ENCODE measurements at regions of chr19 and their contacts with region 1.

Region 1: DNA sequence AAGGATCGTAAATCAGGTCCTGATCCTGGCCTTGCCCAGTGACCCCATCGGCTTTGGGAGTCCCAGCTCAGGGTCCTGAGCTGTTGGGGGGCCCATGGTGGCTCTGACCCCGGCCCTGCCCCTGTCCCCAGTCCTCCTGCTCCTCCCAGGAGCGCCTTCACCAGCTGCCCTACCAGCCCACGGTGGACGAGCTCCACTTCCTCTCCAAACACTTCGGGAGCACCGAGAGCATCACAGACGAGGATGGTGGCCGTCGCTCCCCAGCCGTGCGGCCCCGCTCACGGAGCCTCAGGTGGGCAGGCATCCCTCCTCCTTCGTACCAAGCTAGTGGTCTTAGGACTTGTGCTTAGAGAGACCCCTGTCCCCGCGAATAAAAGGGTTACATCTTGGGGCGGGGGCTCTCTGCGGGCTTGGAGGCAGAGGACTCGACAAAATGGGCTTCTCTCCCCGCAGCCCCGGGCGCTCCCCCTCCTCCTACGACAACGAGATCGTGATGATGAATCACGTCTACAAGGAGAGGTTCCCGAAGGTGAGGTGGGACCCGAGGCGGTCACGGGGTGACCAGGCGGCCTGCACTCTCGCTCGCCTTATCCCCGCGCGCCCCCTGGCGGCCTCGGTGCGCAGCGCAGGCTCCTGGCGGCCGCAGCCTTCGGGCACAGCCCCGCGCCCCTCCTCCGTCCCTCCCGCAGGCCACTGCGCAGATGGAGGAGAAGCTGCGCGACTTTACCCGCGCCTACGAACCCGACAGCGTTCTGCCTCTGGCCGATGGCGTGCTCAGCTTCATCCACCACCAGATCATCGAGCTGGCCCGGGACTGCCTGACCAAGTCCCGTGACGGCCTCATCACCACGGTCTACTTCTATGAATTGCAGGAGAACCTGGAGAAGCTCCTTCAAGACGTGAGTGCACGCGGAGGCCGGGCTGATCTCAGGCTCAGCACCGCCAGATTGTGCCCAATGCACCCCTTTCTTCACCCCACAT is 9.1 kb downstream of the MAST1 start:
- DNase-seq: peak; percentile 76
- ATAC-seq: peak; percentile 97 to 99
- H3K4me3 ChIP-seq: no peak overlapping the region
- H3K27ac ChIP-seq: peak overlapping the region; percentile 20 to 70; a peak in 2 of 6 replicates
- H3K4me1 ChIP-seq: 0 out of 3 replicates have a peak, but pooled peaks cover 3% of the 10 kb centered on the region
- CTCF ChIP-seq: peak; percentile 80
- EP300 ChIP-seq: no peak
- POLR2A ChIP-seq: no peak
- RAD21 ChIP-seq: peak; percentile 75 to 85

Region 2: DNA sequence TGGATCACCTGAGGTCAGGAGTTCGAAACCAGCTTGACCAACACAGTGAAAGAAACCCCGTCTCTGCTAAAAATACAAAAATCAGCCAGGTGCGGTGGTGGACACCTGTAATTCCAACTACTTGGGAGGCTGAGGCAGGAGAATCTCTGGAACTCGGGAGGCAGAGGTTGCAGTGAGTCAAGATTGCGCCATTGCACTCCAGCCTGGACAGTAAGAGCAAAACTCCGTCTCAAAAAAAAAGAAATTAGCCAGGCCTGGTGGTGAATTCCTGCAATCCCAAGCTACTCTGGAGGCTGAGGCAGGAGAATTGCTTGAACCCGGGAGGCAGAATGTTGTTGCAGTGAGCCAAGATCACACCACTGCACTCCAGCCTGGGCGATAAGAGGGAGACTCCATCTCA is 138.8 kb before region 1 on chr19:
- CTCF ChIA-PET with region 1: interaction called, 11 read pairs
- POLR2A ChIA-PET with region 1: no interaction called
- DNase-seq: no peak
- ATAC-seq: no peak
- H3K4me3 ChIP-seq: no peak overlapping the region
- H3K27ac ChIP-seq: no peak overlapping the region
- H3K4me1 ChIP-seq: no peaks in the 10 kb centered on the region
- CTCF ChIP-seq: no peak
- EP300 ChIP-seq: no peak
- POLR2A ChIP-seq: no peak
- RAD21 ChIP-seq: no peak

Region 3: GRCh38 chr19:12766051-12766521 is 81.4 kb before region 1 on chr19:
- CTCF ChIA-PET with region 1: interaction called, 79 read pairs
- POLR2A ChIA-PET with region 1: no interaction called
- DNase-seq: peak; percentile 82 to 84
- ATAC-seq: peak; percentile 97
- H3K4me3 ChIP-seq: peak overlapping the region; percentile 40
- H3K27ac ChIP-seq: peak overlapping the region; percentile 48 to 87; a peak in 5 of 6 replicates
- H3K4me1 ChIP-seq: no peaks in the 10 kb centered on the region
- CTCF ChIP-seq: peak; percentile 78
- EP300 ChIP-seq: no peak
- POLR2A ChIP-seq: peak; percentile 23; the same call in 1 of the 2 replicates
- RAD21 ChIP-seq: peak; percentile 69 to 80

Region 4: GRCh38 chr19:12789904-12790619 is 57.4 kb before region 1 on chr19:
- CTCF ChIA-PET with region 1: interaction called, 16 read pairs
- POLR2A ChIA-PET with region 1: no interaction called
- DNase-seq: peak; percentile 71 to 94
- ATAC-seq: peak; percentile 51 to 53
- H3K4me3 ChIP-seq: peak overlapping the region; percentile 92
- H3K27ac ChIP-seq: peak overlapping the region; percentile 96 to 99
- H3K4me1 ChIP-seq: peaks cover 59% of the 10 kb centered on the region
- CTCF ChIP-seq: no peak
- EP300 ChIP-seq: 0 out of 5 replicates have a peak, but pooled peaks of 1 of the 2 experiments have one; percentile 10
- POLR2A ChIP-seq: 0 out of 2 replicates have a peak, but pooled peaks have one; percentile 9
- RAD21 ChIP-seq: no peak

Region 5: DNA sequence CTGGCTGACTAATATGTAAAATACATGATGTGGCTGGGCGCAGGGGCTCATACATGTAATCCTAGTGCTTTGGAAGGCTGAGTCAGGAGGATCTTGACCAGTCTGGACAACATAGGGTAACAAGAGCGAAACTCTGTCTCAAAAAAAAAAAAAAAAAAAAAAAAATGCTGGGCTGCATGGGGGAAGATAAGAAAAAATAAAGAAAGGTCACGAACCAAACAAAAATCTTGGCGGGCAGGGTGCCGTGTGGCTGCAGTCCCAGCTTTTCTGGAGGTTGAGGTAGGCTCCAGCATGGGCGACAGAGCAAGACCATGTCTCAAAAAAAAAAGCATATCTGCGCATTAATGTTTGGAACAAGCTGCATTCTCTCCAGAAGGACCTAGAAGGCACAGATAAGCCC is 32.4 kb before region 1 on chr19:
- CTCF ChIA-PET with region 1: interaction called, 10 read pairs
- POLR2A ChIA-PET with region 1: no interaction called
- DNase-seq: no peak
- ATAC-seq: no peak
- H3K4me3 ChIP-seq: no peak overlapping the region
- H3K27ac ChIP-seq: no peak overlapping the region
- H3K4me1 ChIP-seq: no peaks in the 10 kb centered on the region
- CTCF ChIP-seq: no peak
- EP300 ChIP-seq: no peak
- POLR2A ChIP-seq: no peak
- RAD21 ChIP-seq: no peak

Region 6: GRCh38 chr19:12859546-12859945 is 12.1 kb after region 1 on chr19:
- CTCF ChIA-PET with region 1: interaction called, 23 read pairs
- POLR2A ChIA-PET with region 1: no interaction called
- DNase-seq: no peak
- ATAC-seq: no peak
- H3K4me3 ChIP-seq: no peak overlapping the region
- H3K27ac ChIP-seq: no peak overlapping the region
- H3K4me1 ChIP-seq: no peaks in the 10 kb centered on the region
- CTCF ChIP-seq: no peak
- EP300 ChIP-seq: no peak
- POLR2A ChIP-seq: no peak
- RAD21 ChIP-seq: no peak

Region 7: GRCh38 chr19:12872941-12873890 is 25.8 kb after region 1 on chr19:
- CTCF ChIA-PET with region 1: interaction called, 31 read pairs
- POLR2A ChIA-PET with region 1: no interaction called
- DNase-seq: peak in 1 of 2 experiments; percentile 64
- ATAC-seq: peak; percentile 58 to 69; a peak in 3 of 6 replicates
- H3K4me3 ChIP-seq: no peak overlapping the region
- H3K27ac ChIP-seq: no peak overlapping the region
- H3K4me1 ChIP-seq: no peaks in the 10 kb centered on the region
- CTCF ChIP-seq: no peak
- EP300 ChIP-seq: no peak
- POLR2A ChIP-seq: no peak
- RAD21 ChIP-seq: no peak

Region 8: DNA sequence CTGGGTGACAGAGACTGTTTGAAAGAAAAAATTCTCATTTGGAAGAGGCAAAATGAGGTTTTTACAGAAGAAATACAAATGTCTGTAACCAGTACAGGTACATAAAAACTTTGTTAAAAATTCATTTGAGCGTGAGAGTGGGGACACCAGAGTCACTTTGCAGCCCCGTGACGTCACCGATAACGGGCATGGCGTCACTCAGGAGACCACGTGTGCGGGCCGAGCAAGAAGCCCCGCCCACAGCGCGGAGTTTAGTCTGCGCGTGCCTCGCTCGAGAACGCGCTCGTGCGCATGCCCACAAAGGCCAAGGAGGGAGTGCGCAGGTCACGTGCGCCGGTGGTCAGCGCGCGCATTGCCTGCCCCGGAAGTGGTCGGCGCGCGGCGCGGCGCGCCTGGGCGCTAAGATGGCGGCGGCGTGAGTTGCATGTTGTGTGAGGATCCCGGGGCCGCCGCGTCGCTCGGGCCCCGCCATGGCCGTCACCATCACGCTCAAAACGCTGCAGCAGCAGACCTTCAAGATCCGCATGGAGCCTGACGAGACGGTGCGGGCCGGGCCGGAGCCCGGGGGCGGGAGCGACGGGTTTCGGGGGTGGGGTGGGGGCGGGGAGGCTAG is 98.1 kb after region 1 on chr19 and contains the start of gene RAD23A:
- CTCF ChIA-PET with region 1: no interaction called
- POLR2A ChIA-PET with region 1: no interaction called
- DNase-seq: peak; percentile 68 to 98
- ATAC-seq: peak; percentile 84 to 89
- H3K4me3 ChIP-seq: peak within 1 kb of the TSS; percentile 95
- H3K27ac ChIP-seq: peak within 1 kb of the TSS; percentile 98 to 100
- H3K4me1 ChIP-seq: peaks cover 17% of the 10 kb centered on the region; the same call in 2 of the 3 replicates
- CTCF ChIP-seq: no peak
- EP300 ChIP-seq: no peak
- POLR2A ChIP-seq: peak; percentile 60
- RAD21 ChIP-seq: no peak
- polyA plus RNA-seq, gene RAD23A: 46.4 and 56.2 TPM in 2 replicates

Region 9: DNA sequence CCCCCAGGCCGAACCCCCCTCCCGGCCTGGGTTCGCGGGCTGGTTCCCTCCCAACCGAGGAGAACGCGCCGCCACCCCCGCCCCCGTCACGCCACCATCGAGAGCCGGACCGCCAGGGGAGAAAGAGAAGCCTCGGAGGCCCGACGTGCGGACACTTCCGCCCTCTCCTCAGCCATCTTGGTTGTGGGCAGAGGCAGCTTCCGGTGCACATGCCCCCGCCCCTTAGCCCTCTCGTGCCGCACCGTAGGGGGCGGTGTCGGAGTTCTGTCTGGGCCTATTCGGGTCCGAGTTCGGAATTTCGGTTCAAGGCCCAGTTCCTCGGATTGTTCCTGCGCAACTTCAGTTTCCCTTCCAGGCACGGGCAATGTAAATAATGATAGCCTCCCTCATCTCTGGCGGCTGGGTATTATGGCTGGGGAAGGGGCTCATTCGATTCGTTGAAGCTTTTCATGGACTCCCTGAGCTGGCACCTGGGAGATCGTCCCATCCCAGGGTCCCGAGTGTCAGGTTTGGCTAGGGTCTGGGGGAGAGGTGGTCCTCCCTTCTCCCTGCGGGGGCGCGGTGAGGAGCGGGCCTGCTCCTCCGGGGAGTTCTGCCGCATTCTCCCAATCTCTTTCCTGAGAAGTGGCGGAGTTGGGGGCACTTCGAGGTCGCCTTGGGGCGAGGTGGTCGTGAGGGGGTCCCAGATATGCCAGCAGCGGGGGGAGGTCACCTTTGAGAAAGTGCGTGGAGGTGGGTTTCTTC is 302.9 kb after region 1 on chr19 and contains the starts of genes IER2 and STX10:
- CTCF ChIA-PET with region 1: no interaction called
- POLR2A ChIA-PET with region 1: no interaction called
- DNase-seq: peak; percentile 82 to 94
- ATAC-seq: peak; percentile 59 to 67
- H3K4me3 ChIP-seq: peak within 1 kb of the TSS; percentile 95
- H3K27ac ChIP-seq: peak within 1 kb of the TSS; percentile 99 to 100
- H3K4me1 ChIP-seq: peaks cover 8% of the 10 kb centered on the region; the same call in 1 of the 3 replicates
- CTCF ChIP-seq: peak; percentile 32
- EP300 ChIP-seq: no peak
- POLR2A ChIP-seq: peak; percentile 35
- RAD21 ChIP-seq: peak in 1 of 2 experiments; percentile 31; a peak in 2 of 5 replicates
- polyA plus RNA-seq, gene IER2: 52.5 and 75.7 TPM in 2 replicates
- polyA plus RNA-seq, gene STX10: 39.1 and 41.5 TPM in 2 replicates

Measured in A549 (cell line).